ENCODE measurements at regions of chr1 and their contacts with region 1.

Region 1: GRCh38 chr1:159779403-159779851 is 1.3 kb upstream of the DUSP23 start:
- DNase-seq: no peak
- ATAC-seq: no peak
- H3K4me3 ChIP-seq: no peak overlapping the region
- H3K27ac ChIP-seq: no peak overlapping the region
- H3K4me1 ChIP-seq: peaks cover 0 to 22% (median 11%) of the 10 kb centered on the region in 4 donors
- H3K27me3 ChIP-seq: no peaks in the 10 kb centered on the region
- CTCF ChIP-seq: no peak
- POLR2A ChIP-seq: no peak

Region 2: DNA sequence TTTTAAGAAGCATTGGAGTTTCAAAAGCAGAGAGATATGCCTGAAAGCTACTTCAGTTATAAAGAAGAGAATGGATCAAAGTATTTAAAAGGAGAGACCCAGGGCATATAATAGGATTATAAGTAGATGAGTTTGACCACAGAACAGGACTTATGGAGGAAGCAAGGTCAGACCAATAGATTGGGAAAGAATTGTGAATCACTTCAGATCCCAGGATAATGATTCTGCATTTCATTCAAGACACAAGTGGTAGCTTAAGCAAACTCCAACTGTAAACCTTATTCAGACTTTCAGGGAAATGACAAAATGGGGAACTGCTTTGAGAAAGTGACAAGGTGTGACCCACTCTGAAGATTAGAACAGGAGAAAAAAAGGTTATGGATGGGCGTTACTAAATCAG is 224.7 kb before region 1 on chr1:
- intact Hi-C with region 1: loop called in 1 of 2 experiments (anchors 5 kb)
- DNase-seq: no peak
- ATAC-seq: no peak
- H3K4me3 ChIP-seq: no peak overlapping the region
- H3K27ac ChIP-seq: no peak overlapping the region
- H3K4me1 ChIP-seq: peaks cover 0 to 10% (median 3%) of the 10 kb centered on the region in 4 donors
- H3K27me3 ChIP-seq: no peaks in the 10 kb centered on the region
- CTCF ChIP-seq: no peak
- POLR2A ChIP-seq: no peak

Region 3: GRCh38 chr1:159737238-159737916 is 42.0 kb before region 1 on chr1:
- intact Hi-C with region 1: no loop called
- DNase-seq: no peak
- ATAC-seq: no peak
- H3K4me3 ChIP-seq: no peak overlapping the region
- H3K27ac ChIP-seq: no peak overlapping the region
- H3K4me1 ChIP-seq: no peaks in the 10 kb centered on the region
- H3K27me3 ChIP-seq: no peaks in the 10 kb centered on the region
- CTCF ChIP-seq: no peak
- POLR2A ChIP-seq: no peak

Region 4: GRCh38 chr1:159854693-159855192 is 75.3 kb after region 1 on chr1:
- intact Hi-C with region 1: no loop called
- DNase-seq: peak; percentile 70 to 79 (median 76)
- ATAC-seq: peak; percentile 81 to 89 (median 82)
- H3K4me3 ChIP-seq: peak overlapping the region; percentile 38 to 54 (median 48)
- H3K27ac ChIP-seq: peak overlapping the region; percentile 18 to 66 (median 59)
- H3K4me1 ChIP-seq: no peaks in the 10 kb centered on the region
- H3K27me3 ChIP-seq: no peaks in the 10 kb centered on the region
- CTCF ChIP-seq: no peak
- POLR2A ChIP-seq: peak; percentile 43

Measured in right lobe of liver (tissue), 6 donors.